Motor neuron (in vitro differentiated cells): ENCODE measurements at regions of chr9 and their contacts with region 1.

Region 1: GRCh38 chr9:115997923-115998322 is 155.7 kb upstream of the PAPPA start:
- ATAC-seq: peak in 2 of 8 experiments; percentile 14 to 80
- H3K4me3 ChIP-seq: no peak overlapping the region
- H3K27ac ChIP-seq: no peak overlapping the region
- H3K4me1 ChIP-seq: no peaks in the 10 kb centered on the region

Region 2: GRCh38 chr9:116087246-116087645 is 89.3 kb after region 1 on chr9:
- in situ Hi-C with region 1: loop called in 1 of 9 experiments (anchors 25 kb)
- ATAC-seq: peak in 7 of 8 experiments; percentile 52 to 97 (median 60)
- H3K4me3 ChIP-seq: no peak overlapping the region
- H3K27ac ChIP-seq: no peak overlapping the region
- H3K4me1 ChIP-seq: no peaks in the 10 kb centered on the region